A673 (cell line): ENCODE measurements at regions of chr14 and their contacts with region 1.

Region 1: DNA sequence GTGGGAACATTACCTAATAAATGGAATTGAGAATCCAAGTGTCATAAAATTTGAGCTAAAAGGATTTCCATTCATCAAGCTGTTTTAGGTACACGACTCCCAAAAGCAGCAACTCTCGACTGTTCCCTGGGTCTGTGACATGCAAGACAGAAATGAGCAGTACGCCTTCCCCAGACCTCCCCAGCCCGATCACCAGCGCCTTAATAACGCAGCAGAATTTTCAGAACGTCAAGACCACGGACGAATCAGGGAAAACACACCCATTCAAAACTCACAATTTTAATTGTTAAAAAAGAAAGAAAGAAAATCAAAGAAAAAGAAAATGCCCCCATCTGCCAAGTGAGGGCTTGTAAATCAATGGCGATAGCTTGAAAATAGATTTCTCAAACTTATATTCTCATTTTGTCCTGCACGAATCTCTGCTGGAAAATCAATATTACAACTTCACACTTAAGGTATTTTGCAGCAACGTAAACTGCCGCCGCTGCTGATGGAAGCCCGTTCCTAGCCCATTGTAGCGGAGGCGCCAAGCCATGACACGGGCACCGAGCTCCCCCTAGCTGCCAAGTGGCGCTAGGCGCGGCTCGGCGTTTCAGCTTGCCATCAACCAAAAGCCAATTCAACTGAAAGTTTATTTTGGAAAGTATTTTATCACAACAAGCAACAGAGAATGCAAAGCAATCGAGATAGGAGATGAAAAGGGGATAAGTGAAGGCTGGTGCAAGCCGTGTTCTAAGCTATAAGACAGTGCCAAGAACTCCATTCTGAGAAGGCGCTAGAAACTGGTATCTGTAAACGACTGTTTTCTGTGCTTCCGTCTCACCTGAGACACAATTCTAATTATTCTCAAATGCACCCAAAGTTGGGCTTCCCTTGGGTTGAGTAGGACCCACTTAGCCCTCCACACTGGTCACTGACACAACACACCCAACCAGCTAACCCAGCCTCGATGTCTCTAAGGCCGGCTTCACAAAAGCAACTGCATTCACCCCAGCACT is 5.5 kb downstream of the BCL11B start:
- DNase-seq: peak; percentile 90
- H3K4me3 ChIP-seq: peak overlapping the region; percentile 85
- H3K27ac ChIP-seq: peak overlapping the region; percentile 93
- H3K4me1 ChIP-seq: peaks cover 57% of the 10 kb centered on the region
- H3K27me3 ChIP-seq: no peaks in the 10 kb centered on the region
- CTCF ChIP-seq: peak; percentile 100

Region 2: DNA sequence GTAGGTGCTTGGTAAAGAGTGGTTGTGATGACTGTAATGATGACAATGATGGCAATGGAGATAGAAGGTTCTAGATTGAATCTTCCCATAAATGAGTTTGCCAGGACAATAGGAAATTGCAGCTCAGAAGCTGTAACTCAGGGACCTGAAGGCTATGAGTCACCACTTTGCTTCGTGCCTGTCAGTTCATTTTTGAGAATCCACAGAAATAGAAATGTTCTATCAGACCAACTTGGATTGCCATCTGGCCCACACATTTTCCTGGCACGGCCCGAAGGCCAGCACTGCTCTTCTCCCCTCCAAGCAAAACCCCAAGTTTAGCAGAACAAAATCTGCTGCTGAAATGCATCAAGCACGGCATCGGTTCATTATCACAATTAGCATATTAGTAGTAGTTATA is 1121.5 kb before region 1 on chr14:
- CTCF ChIA-PET with region 1: no interaction called
- POLR2A ChIA-PET with region 1: no interaction called
- intact Hi-C with region 1: loop called (anchors 5 kb)
- DNase-seq: no peak
- H3K4me3 ChIP-seq: no peak overlapping the region
- H3K27ac ChIP-seq: no peak overlapping the region
- H3K4me1 ChIP-seq: no peaks in the 10 kb centered on the region
- H3K27me3 ChIP-seq: no peaks in the 10 kb centered on the region
- CTCF ChIP-seq: no peak

Region 3: DNA sequence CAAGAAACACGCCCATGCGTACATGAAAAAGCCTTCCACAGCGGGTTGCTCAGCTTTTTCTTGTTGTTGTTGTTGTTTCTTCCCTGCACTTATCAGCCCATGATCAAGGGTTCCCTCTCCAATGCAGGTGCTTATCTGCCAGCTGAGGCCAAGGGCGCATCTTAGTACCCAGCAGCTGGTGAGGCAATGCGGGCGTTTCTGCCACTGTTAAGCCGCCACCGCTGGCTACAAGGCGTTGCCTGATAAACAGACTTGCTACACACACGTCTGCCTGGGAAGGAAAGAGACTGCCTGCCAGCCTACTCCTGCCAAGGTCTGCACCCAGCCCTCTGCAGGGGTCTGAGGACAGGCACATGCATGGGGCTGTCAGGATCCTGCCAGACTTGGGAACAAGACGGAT is 340.3 kb before region 1 on chr14:
- CTCF ChIA-PET with region 1: no interaction called
- POLR2A ChIA-PET with region 1: no interaction called
- intact Hi-C with region 1: loop called (anchors 10 kb)
- DNase-seq: no peak
- H3K4me3 ChIP-seq: no peak overlapping the region
- H3K27ac ChIP-seq: no peak overlapping the region
- H3K4me1 ChIP-seq: no peaks in the 10 kb centered on the region
- H3K27me3 ChIP-seq: no peaks in the 10 kb centered on the region
- CTCF ChIP-seq: no peak

Region 4: GRCh38 chr14:99164712-99165111 is 101.8 kb before region 1 on chr14:
- CTCF ChIA-PET with region 1: interaction called, 13 read pairs
- POLR2A ChIA-PET with region 1: no interaction called
- intact Hi-C with region 1: no loop called
- DNase-seq: no peak
- H3K4me3 ChIP-seq: no peak overlapping the region
- H3K27ac ChIP-seq: no peak overlapping the region
- H3K4me1 ChIP-seq: no peaks in the 10 kb centered on the region
- H3K27me3 ChIP-seq: no peaks in the 10 kb centered on the region
- CTCF ChIP-seq: no peak

Region 5: GRCh38 chr14:99199846-99200653 is 66.4 kb before region 1 on chr14:
- CTCF ChIA-PET with region 1: no interaction called
- POLR2A ChIA-PET with region 1: no interaction called
- intact Hi-C with region 1: loop called (anchors 5 kb)
- DNase-seq: peak; percentile 51
- H3K4me3 ChIP-seq: no peak overlapping the region
- H3K27ac ChIP-seq: peak overlapping the region; percentile 51
- H3K4me1 ChIP-seq: peaks cover 91% of the 10 kb centered on the region
- H3K27me3 ChIP-seq: no peaks in the 10 kb centered on the region
- CTCF ChIP-seq: peak; percentile 24; the same call in 1 of the 2 replicates

Region 6: GRCh38 chr14:99242816-99243721 is 23.4 kb before region 1 on chr14:
- CTCF ChIA-PET with region 1: no interaction called
- POLR2A ChIA-PET with region 1: interaction called, 20 read pairs
- intact Hi-C with region 1: no loop called
- DNase-seq: no peak
- H3K4me3 ChIP-seq: no peak overlapping the region
- H3K27ac ChIP-seq: peak overlapping the region; percentile 68
- H3K4me1 ChIP-seq: peaks cover 89% of the 10 kb centered on the region
- H3K27me3 ChIP-seq: no peaks in the 10 kb centered on the region
- CTCF ChIP-seq: no peak